ENCODE measurements at regions of chr7 and their contacts with region 1.

Region 1: DNA sequence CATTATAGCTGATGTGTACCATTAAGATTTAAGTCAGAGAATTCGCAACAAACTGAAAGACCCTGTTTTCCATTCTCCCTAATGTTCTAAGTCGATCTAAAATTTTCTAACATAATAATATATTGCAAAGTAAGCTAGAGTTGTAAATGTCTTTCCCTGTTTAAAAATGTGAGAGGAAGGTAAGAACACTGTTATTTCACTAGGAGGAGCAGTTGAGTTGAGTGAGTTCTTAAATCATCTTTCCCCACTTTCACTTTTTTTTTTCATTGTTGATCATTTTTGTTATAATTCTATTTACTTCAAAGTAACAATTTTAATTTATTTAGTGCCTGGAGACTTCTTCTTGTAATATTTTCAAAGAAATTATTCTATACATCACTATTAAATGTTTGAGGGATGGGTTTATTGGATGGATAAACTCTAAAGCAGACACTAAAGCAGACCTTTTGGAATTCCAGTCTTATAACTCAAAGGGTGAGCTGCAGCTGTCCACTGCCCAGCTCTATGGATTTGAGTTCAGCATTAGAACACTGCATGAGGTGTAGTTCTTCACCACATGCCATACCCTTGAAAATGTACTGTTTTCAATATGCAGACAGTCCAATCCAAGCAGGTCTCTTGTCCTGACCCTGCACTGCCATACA is 181.3 kb upstream of the FZD1 start:
- DNase-seq: no peak
- H3K4me3 ChIP-seq: no peak overlapping the region
- H3K27ac ChIP-seq: peak overlapping the region in 1 of 2 donors; percentile 46
- H3K4me1 ChIP-seq: peaks cover 3% of the 10 kb centered on the region
- H3K27me3 ChIP-seq: no peaks in the 10 kb centered on the region
- CTCF ChIP-seq: peak in 1 of 3 donors; percentile 39
- EP300 ChIP-seq: no peak
- POLR2A ChIP-seq: no peak

Region 2: DNA sequence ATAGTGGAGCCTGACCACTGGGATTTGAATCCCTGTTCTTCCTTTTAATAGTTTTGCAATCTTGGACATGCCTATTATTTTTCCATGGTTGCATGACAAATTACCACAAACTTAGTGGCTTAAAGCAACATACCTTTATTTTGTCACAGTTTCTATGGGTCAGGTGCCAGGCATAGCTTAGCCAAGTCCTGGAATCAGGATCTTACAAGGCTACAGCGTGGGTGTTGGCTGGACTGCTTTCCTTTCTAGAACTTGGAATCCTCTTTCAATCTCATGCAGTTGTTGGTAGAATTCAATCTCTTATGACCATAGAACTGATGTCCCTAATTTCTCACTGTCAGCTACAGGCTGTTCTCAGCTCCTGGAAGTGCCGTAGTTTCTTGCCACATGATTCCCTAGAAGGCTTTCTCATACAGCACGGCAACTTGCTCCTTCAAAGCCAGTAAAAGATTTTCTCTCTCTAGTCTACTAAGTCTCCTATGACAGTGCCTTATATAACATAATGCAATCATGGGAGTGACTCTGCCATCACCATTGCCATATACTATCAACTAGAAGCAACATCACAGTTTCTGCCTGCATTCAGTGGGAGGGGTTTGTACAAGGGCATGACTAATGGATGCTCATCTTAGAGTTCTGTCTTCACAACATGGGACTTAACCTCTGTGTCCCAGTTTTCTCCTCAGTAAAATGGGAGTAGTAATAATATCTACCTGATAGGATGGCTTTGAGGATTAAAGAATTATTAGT is 62.2 kb before region 1 on chr7:
- intact Hi-C with region 1: no loop called
- DNase-seq: no peak
- H3K4me3 ChIP-seq: no peak overlapping the region
- H3K27ac ChIP-seq: no peak overlapping the region
- H3K4me1 ChIP-seq: no peaks in the 10 kb centered on the region
- H3K27me3 ChIP-seq: no peaks in the 10 kb centered on the region
- CTCF ChIP-seq: no peak
- EP300 ChIP-seq: no peak
- POLR2A ChIP-seq: no peak

Region 3: DNA sequence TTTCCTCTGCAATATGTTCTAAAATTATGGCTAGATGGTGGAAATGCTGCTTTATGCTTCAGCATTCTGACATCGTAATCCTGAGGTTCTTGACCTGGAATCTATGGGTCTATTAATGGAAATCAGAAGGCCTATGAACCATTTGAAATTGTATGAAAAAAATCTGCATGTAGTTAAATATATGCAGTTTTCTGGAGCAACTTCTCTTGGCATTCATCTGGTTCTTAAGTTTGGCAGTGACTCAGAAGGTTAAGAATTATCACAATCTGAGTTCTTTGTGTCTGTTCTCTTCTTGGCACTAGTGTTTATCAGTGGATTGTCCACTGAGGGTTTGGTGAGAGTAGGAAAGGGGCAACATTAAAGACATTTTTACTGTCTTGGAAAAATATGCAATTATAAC is 110.2 kb after region 1 on chr7:
- intact Hi-C with region 1: no loop called
- DNase-seq: no peak
- H3K4me3 ChIP-seq: no peak overlapping the region
- H3K27ac ChIP-seq: no peak overlapping the region
- H3K4me1 ChIP-seq: peaks cover 5% of the 10 kb centered on the region
- H3K27me3 ChIP-seq: no peaks in the 10 kb centered on the region
- CTCF ChIP-seq: no peak
- EP300 ChIP-seq: no peak
- POLR2A ChIP-seq: no peak

Region 4: DNA sequence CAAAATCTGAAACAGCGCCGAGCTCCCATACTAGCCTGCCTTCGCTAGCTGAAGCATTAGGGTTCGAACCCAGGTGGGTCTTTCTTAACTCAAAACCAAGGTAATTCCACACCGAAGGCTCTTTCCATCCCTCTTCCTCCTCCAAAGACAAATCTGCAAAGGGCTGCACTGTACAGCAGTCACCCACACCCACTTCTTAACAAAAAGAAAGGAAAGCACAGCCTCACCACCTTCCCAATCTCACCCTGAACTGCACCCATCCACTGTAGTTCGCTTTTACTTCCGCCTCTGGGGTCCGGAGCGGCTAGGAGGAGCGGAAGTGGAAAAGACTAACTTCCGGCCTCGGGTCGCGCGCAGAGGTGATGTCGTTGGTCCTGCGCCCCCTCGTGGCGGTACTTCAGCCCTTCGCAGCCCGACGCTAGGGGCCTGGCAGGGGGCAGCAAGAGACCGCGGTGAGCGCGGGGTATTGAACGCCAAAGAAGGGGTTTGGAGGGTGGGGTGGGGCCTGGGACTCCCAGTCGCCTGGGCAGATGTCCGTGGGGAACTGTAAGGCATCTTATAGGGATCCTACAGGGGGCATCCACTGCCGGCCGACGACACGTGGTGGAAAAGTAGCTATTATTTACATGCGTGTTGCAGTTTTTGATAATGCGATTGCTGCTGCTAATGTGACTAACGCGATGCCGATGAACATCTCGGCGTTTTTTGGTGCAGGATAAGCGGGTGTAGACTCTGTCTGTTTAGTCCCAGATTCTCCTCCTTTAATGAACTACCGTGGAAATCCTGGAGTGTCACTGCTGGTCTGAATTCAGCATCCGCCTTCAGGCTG is 797.7 kb after region 1 on chr7 and contains the start of gene MTERF1:
- intact Hi-C with region 1: loop called in 1 of 4 experiments (anchors 5 kb)
- DNase-seq: peak; percentile 90 to 96 (median 93)
- H3K4me3 ChIP-seq: peak within 1 kb of the TSS; percentile 61
- H3K27ac ChIP-seq: peak within 1 kb of the TSS in 1 of 2 donors; percentile 26
- H3K4me1 ChIP-seq: peaks cover 3% of the 10 kb centered on the region
- H3K27me3 ChIP-seq: no peaks in the 10 kb centered on the region
- CTCF ChIP-seq: peak; percentile 95 to 99 (median 96)
- EP300 ChIP-seq: no peak
- POLR2A ChIP-seq: no peak
- total RNA-seq, gene MTERF1: 2.8 to 17.8 (median 9.9) TPM

Measured in ovary (tissue), 10 donors.